ENCODE measurements at regions of chr12 and their contacts with region 1.

Region 1: DNA sequence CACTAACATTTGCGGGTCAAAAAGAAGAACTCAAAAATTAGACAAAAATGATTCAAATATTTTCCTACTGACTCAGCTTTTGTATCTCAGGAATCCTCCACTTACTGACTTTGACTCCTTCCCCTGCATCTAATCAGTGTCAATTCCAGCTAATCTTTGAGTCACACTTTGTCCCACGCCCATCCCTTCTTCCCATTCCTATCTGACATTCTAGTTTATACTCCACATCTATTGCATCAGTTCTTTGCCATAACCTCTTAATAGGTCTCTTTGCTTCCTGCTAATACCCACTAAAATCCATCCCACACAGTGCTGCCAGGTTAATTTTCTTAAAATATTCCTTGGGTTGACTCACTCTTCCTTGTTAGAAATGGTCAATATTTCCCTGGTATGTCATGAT is 19.1 kb downstream of the BBS10 start:
- DNase-seq: peak; percentile 86
- ATAC-seq: peak; percentile 79
- H3K4me3 ChIP-seq: no peak overlapping the region
- H3K27ac ChIP-seq: peak overlapping the region; percentile 87
- H3K4me1 ChIP-seq: peaks cover 17 to 43% of the 10 kb centered on the region in 2 experiments
- H3K27me3 ChIP-seq: no peaks in the 10 kb centered on the region
- CTCF ChIP-seq: no peak
- POLR2A ChIP-seq: no peak
- RAD21 ChIP-seq: peak; percentile 36

Region 2: GRCh38 chr12:75722714-75723200 is 606.4 kb before region 1 on chr12:
- CTCF ChIA-PET with region 1: interaction called, 4 read pairs
- POLR2A ChIA-PET with region 1: interaction called, 3 read pairs
- RAD21 ChIA-PET with region 1: no interaction called
- intact Hi-C with region 1: loop called (anchors 1 kb)
- DNase-seq: peak; percentile 77
- ATAC-seq: no peak
- H3K4me3 ChIP-seq: no peak overlapping the region
- H3K27ac ChIP-seq: peak overlapping the region; percentile 100
- H3K4me1 ChIP-seq: peaks cover 87 to 96% of the 10 kb centered on the region in 2 experiments
- H3K27me3 ChIP-seq: no peaks in the 10 kb centered on the region
- CTCF ChIP-seq: no peak
- POLR2A ChIP-seq: no peak
- RAD21 ChIP-seq: no peak

Region 3: DNA sequence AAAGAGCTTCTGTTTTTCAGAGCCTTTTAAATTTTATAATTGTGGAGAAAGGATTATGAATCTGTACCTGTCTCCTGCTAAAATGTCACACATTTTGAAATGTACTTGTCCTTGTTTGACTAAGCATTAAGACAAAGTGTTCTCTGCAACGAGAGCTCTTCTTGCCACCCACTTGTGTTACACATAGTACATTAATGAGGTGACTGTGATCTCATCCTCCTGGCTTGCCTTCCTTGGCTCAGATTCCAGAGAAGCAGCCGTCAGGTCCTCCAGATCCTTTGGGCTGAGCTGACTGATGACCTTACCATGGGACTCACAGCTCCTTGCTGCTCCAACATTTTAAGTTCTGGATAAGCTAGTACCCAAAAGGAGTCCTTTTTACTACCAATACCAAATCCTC is 62.4 kb before region 1 on chr12:
- CTCF ChIA-PET with region 1: no interaction called
- POLR2A ChIA-PET with region 1: no interaction called
- RAD21 ChIA-PET with region 1: no interaction called
- intact Hi-C with region 1: no loop called
- DNase-seq: no peak
- ATAC-seq: no peak
- H3K4me3 ChIP-seq: no peak overlapping the region
- H3K27ac ChIP-seq: no peak overlapping the region
- H3K4me1 ChIP-seq: no peaks in the 10 kb centered on the region
- H3K27me3 ChIP-seq: no peaks in the 10 kb centered on the region
- CTCF ChIP-seq: no peak
- POLR2A ChIP-seq: no peak
- RAD21 ChIP-seq: no peak